CD14-positive monocyte (primary cell): ENCODE measurements at regions of chr22 and their contacts with region 1.

Region 1: GRCh38 chr22:42369245-42370041 is 62.8 kb downstream of the NFAM1 start:
- DNase-seq: peak; percentile 79 to 90 (median 88)
- H3K4me3 ChIP-seq: peak overlapping the region; percentile 40 to 74 (median 42)
- H3K4me3 Mint-ChIP-seq: peak overlapping the region; percentile 81 to 93
- H3K27ac ChIP-seq: no peak overlapping the region
- H3K27ac Mint-ChIP-seq: peak overlapping the region in 6 of 7 donors; percentile 56 to 86 (median 74)
- H3K4me1 ChIP-seq: peaks cover 20 to 26% of the 10 kb centered on the region in 2 donors
- H3K4me1 Mint-ChIP-seq: peaks cover 27% of the 10 kb centered on the region
- H3K27me3 ChIP-seq: peaks cover 37 to 47% of the 10 kb centered on the region in 2 donors
- H3K27me3 Mint-ChIP-seq: peaks cover 50 to 76% (median 60%) of the 10 kb centered on the region in 3 donors
- CTCF ChIP-seq: no peak

Region 2: GRCh38 chr22:42300259-42301076 is 69.0 kb before region 1 on chr22:
- intact Hi-C with region 1: loop called in 1 of 2 experiments (anchors 5 kb)
- DNase-seq: peak; percentile 43 to 81 (median 46)
- H3K4me3 ChIP-seq: peak overlapping the region; percentile 6 to 69 (median 20)
- H3K4me3 Mint-ChIP-seq: peak overlapping the region; percentile 75 to 87
- H3K27ac ChIP-seq: peak overlapping the region; percentile 71 to 76
- H3K27ac Mint-ChIP-seq: peak overlapping the region; percentile 61 to 92 (median 88)
- H3K4me1 ChIP-seq: peaks cover 42 to 66% of the 10 kb centered on the region in 2 donors
- H3K4me1 Mint-ChIP-seq: peaks cover 58% of the 10 kb centered on the region
- H3K27me3 ChIP-seq: peaks cover 0 to 8% of the 10 kb centered on the region in 2 donors
- H3K27me3 Mint-ChIP-seq: peaks cover 8 to 28% (median 12%) of the 10 kb centered on the region in 3 donors
- CTCF ChIP-seq: no peak

Region 3: GRCh38 chr22:42432020-42432596 is 62.7 kb after region 1 on chr22 and contains the start of gene NFAM1:
- intact Hi-C with region 1: loop called in 1 of 2 experiments (anchors 5 kb)
- DNase-seq: peak; percentile 86 to 92 (median 89)
- H3K4me3 ChIP-seq: peak within 1 kb of the TSS; percentile 86 to 100 (median 90)
- H3K4me3 Mint-ChIP-seq: peak within 1 kb of the TSS; percentile 99
- H3K27ac ChIP-seq: peak within 1 kb of the TSS; percentile 94 to 96
- H3K27ac Mint-ChIP-seq: peak within 1 kb of the TSS; percentile 96 to 99 (median 98)
- H3K4me1 ChIP-seq: peaks cover 89 to 97% of the 10 kb centered on the region in 2 donors
- H3K4me1 Mint-ChIP-seq: peaks cover 85% of the 10 kb centered on the region
- H3K27me3 ChIP-seq: no peaks in the 10 kb centered on the region
- H3K27me3 Mint-ChIP-seq: peaks cover 0 to 2% (median 0%) of the 10 kb centered on the region in 3 donors
- CTCF ChIP-seq: no peak
- polyA plus RNA-seq, gene NFAM1: 36.0 to 71.0 (median 69.7) TPM

Region 4: DNA sequence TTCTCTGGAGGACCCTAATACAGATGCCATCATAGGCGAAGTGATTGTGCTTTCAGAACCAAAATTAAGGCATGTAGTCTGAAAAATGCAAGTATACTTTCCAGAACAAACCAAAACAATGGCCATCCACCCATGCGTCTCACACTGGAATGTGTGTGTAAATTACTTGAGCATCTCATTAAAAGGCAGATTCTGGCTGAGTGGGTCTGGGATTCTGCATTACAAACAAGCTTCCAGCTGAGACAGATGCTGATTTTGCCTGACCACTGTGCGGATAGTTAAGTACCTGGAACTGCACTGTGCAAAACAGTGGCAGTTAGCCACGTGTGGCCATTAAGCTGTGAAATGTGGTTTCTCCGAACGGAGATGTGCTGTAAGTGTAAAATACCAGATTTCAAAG is 124.0 kb after region 1 on chr22:
- intact Hi-C with region 1: no loop called
- DNase-seq: no peak
- H3K4me3 ChIP-seq: no peak overlapping the region
- H3K4me3 Mint-ChIP-seq: no peak overlapping the region
- H3K27ac ChIP-seq: no peak overlapping the region
- H3K27ac Mint-ChIP-seq: no peak overlapping the region
- H3K4me1 ChIP-seq: no peaks in the 10 kb centered on the region
- H3K4me1 Mint-ChIP-seq: peaks cover 6% of the 10 kb centered on the region
- H3K27me3 ChIP-seq: no peaks in the 10 kb centered on the region
- H3K27me3 Mint-ChIP-seq: peaks cover 3 to 10% (median 8%) of the 10 kb centered on the region in 3 donors
- CTCF ChIP-seq: no peak